GM10248 (cell line): ENCODE measurements at regions of chr3 and their contacts with region 1.

Region 1: GRCh38 chr3:8095724-8096123 is 405.9 kb upstream of the LMCD1 start:
- DNase-seq: no peak
- CTCF ChIP-seq: no peak

Region 2: DNA sequence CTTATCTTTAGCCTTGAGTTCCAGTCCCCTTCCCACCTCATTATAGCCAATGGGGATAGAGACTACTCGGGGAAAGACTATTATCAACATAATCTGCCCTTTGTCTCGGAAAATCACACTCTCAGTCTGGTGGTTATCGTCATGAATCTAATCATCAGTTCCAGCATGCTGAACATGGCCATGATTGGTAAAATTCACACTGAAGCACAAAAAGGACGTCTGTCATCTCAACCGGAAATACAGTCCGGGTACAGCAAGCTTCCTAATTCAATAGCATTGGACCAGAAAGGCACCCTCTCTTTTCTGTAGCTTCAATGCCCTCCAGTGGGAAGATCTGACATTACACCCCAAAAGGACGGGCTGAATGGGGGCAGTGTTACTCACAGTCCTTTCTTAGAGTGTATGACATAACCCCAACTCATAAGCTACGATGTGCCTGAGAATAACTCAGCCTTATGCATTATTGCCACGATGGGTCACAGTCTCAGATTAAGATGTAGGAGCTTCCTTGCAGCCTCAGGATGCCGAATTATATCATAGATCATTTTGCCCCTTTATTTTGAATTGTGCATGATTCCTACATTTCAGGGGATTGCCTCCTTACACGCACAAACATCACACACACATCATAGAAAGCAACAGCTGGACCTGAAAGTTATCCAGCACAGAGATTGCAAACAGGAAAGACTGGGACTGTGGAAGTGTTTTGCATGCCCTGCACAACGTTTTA is 15.5 kb after region 1 on chr3:
- CTCF ChIA-PET with region 1: interaction called, 13 read pairs
- POLR2A ChIA-PET with region 1: no interaction called
- DNase-seq: peak; percentile 38
- CTCF ChIP-seq: peak; percentile 68